ENCODE measurements at regions of chr13 and their contacts with region 1.

Region 1: GRCh38 chr13:102571075-102571474 is 25.7 kb upstream of the TPP2 start:
- DNase-seq: no peak
- ATAC-seq: peak; percentile 53; the same call in 1 of the 3 replicates
- H3K4me3 ChIP-seq: no peak overlapping the region
- H3K27ac ChIP-seq: no peak overlapping the region
- H3K4me1 ChIP-seq: no peaks in the 10 kb centered on the region
- H3K27me3 ChIP-seq: peaks cover 0 to 5% of the 10 kb centered on the region in 2 experiments; a peak in 1 of 5 replicates
- CTCF ChIP-seq: peak in 1 of 3 experiments; percentile 36; a peak in 2 of 6 replicates
- EP300 ChIP-seq: no peak
- POLR2A ChIP-seq: no peak
- RAD21 ChIP-seq: 0 out of 4 replicates have a peak, but pooled peaks of 1 of the 2 experiments have one; percentile 12

Region 2: DNA sequence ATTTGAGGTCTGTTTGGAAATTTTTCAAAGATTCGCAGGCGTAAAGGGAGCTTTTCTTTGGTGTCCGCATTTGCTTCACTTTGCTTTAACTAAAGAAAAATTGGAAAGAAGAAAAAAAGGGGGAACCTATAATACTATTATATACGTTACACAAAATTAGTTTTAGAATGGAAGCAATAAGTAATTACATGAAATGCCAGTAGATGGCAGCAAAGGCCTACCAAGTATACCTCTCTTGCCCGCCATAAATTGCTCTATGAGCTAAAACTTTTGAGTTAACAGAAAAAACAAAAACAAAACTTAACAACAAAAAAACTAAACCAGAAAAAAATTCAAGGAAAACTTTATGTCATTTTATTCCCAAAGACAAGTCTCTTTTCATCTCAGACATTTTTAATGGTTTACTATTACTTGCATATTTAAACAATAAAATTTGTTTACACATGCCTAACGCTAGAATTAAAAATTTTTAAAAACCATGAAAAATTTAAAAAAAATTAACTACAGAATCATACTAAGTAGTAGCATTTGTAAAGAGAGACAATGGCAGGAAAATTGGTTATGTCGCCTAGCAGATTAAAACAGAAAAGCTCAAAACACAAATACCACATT is 1426.2 kb before region 1 on chr13:
- CTCF ChIA-PET with region 1: no interaction called
- POLR2A ChIA-PET with region 1: no interaction called
- in situ Hi-C with region 1: loop called (anchors 25 kb)
- intact Hi-C with region 1: loop called (anchors 5 kb)
- DNase-seq: peak; percentile 12 to 47 (median 22)
- ATAC-seq: peak; percentile 68
- H3K4me3 ChIP-seq: no peak overlapping the region
- H3K27ac ChIP-seq: no peak overlapping the region
- H3K4me1 ChIP-seq: no peaks in the 10 kb centered on the region
- H3K27me3 ChIP-seq: no peaks in the 10 kb centered on the region
- CTCF ChIP-seq: peak; percentile 24 to 64 (median 33); a peak in 3 of 6 replicates
- EP300 ChIP-seq: no peak
- POLR2A ChIP-seq: no peak
- RAD21 ChIP-seq: peak; percentile 59 to 70

Region 3: DNA sequence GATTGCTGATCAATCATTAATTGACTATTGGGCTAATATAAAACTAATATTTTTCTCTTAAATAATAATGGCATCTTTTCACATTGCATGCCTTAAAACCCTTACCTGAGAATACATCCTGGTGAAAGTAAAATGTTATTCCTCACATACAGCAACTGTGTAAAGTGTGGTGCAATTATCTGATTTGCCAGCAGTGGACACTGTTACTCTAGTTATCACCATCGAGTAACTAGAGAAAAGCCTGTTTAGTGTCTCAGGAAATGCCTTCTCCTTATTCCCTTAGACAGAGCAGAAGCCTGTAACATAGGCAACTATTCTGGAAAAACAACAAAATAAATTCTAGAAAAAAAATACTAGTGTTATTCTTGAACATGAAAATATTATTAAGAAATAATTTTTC is 629.0 kb before region 1 on chr13:
- CTCF ChIA-PET with region 1: no interaction called
- POLR2A ChIA-PET with region 1: no interaction called
- in situ Hi-C with region 1: no loop called
- intact Hi-C with region 1: loop called (anchors 10 kb)
- DNase-seq: no peak
- ATAC-seq: no peak
- H3K4me3 ChIP-seq: no peak overlapping the region
- H3K27ac ChIP-seq: no peak overlapping the region
- H3K4me1 ChIP-seq: no peaks in the 10 kb centered on the region
- H3K27me3 ChIP-seq: no peaks in the 10 kb centered on the region
- CTCF ChIP-seq: peak in 1 of 3 experiments; percentile 12; a peak in 1 of 6 replicates
- EP300 ChIP-seq: no peak
- POLR2A ChIP-seq: no peak
- RAD21 ChIP-seq: peak in 1 of 2 experiments; percentile 42; a peak in 3 of 4 replicates

Region 4: DNA sequence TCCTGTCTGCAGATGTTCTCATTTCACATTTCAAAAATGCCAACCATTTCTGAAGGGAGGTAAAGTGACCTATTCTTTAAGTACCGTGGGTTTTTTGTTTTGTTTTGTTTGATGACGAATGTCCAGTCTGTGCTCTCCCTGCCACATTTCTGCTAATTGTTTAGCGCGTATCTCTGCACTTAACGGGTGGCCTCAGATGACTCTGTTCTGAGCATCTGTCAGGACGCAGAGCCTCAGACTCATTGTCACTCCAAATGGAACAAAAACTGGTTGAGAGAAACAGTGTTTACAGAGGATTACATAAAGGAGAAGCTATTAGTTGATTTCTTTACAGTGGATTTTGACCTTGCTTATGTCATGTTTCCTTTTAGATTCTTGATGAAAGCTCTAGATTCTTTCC is 49.4 kb after region 1 on chr13:
- CTCF ChIA-PET with region 1: no interaction called
- POLR2A ChIA-PET with region 1: no interaction called
- in situ Hi-C with region 1: no loop called
- intact Hi-C with region 1: no loop called
- DNase-seq: no peak
- ATAC-seq: no peak
- H3K4me3 ChIP-seq: no peak overlapping the region
- H3K27ac ChIP-seq: no peak overlapping the region
- H3K4me1 ChIP-seq: no peaks in the 10 kb centered on the region
- H3K27me3 ChIP-seq: no peaks in the 10 kb centered on the region
- CTCF ChIP-seq: no peak
- EP300 ChIP-seq: no peak
- POLR2A ChIP-seq: no peak
- RAD21 ChIP-seq: no peak